Posterior vena cava (tissue), 2 donors: ENCODE measurements at regions of chr4 and their contacts with region 1.

Region 1: DNA sequence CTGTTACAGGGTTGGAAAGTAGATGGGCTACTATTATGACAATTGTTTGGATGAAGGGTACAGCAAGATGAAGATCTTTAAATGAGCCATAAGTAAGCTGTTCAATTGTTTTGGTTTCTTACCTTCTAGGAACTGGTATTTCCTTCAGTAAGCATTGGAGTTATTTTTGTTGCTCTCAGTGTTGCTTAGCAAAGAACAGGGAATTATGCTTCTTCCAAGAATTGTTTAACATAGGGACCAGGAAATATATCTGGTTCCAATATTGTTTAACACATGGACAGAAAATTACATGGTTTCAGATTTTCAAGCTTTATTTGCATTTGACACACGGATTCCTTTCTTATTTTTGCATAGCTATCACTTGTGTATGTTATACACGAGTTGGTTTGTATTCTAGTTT is 1999.0 kb downstream of the ARAP2 start:
- DNase-seq: no peak

Region 2: GRCh38 chr4:32396504-32397070 is 1848.7 kb before region 1 on chr4:
- intact Hi-C with region 1: loop called in 1 of 2 experiments (anchors 5 kb)
- DNase-seq: no peak

Region 3: GRCh38 chr4:34220601-34221000 is 24.7 kb before region 1 on chr4:
- intact Hi-C with region 1: no loop called
- DNase-seq: no peak